Posterior cingulate gyrus (tissue), 11 donors: ENCODE measurements at regions of chr20 and their contacts with region 1.

Region 1: DNA sequence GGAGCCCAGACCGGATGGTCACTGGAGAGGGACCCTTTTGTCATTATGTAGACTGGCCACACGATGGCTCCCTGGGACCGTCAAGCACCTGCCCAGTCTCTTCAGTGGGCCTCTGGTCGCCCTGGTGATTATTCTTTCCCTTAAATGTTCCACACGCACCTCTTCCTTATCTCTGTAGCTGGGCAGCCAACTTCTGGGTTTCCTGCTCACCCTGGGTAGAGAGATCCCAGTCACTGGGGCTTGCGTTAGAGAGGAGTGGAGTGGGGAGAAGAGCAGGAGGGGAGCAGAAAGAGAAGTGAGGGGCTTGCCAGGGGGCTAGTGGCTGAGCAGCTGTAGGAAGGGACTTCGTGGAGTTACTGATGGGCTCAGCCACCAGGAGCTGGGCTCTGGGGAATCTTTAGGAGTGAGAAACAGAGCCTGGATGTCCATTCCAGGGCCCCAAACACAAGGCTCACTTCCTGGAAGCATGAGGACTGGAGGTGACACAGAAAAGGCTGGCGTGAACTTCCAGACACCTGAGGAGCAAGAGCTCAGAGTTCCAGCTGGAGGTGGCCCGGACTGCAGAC is 150.1 kb downstream of the DHX35 start:
- DNase-seq: peak in 9 of 10 donors; percentile 14 to 91 (median 51)

Region 2: GRCh38 chr20:38947931-38948362 is 164.3 kb before region 1 on chr20:
- intact Hi-C with region 1: no loop called
- DNase-seq: no peak

Region 3: GRCh38 chr20:40962730-40963504 is 1850.7 kb after region 1 on chr20:
- intact Hi-C with region 1: loop called (anchors 5 kb)
- DNase-seq: peak; percentile 39 to 95 (median 75)